Activated CD4-positive, alpha-beta T cell treated with anti-CD3 and anti-CD28 coated beads for 36 hours (primary cell): ENCODE measurements at regions of chr19 and their contacts with region 1.

Region 1: DNA sequence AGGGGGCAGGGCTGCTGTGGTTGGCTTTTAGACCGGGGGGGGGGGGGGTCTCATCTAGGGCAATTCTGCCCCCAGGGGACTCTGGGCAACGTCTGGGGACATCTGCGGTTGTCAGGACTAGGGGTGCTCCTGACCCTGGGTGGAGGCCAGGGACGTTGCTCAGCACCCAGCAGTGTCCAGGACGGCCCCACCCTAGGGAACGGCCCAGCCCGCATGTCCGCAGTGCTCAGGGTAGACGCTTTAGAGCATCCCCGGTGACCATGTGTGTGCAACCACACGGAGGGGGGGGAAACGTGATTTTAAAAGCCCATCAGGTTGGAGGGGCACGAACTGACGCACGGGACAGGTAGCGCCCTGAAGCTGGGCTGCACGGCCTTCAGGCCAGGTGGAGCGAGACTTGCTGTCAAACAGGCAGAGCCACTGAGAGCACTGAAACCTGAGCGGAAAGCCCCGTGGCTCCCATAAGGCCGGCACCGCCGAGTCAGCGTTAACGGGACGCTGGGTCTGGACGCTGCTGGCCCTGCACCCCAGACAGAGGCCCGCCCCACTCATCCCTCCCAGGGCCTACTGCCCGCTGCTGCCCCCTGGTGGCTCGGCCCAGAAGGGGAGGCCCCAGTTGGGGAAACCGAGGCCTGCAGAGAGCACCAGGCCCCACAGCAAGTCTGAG is 8.3 kb downstream of the CACTIN start:
- DNase-seq: peak; percentile 75
- ATAC-seq: peak; percentile 62
- H3K4me3 Mint-ChIP-seq: no peak overlapping the region
- H3K27ac Mint-ChIP-seq: no peak overlapping the region
- H3K4me1 Mint-ChIP-seq: peaks cover 13% of the 10 kb centered on the region
- H3K27me3 Mint-ChIP-seq: no peaks in the 10 kb centered on the region

Region 2: GRCh38 chr19:3544742-3545668 is 73.3 kb before region 1 on chr19:
- CTCF ChIA-PET with region 1: no interaction called
- POLR2A ChIA-PET with region 1: no interaction called
- intact Hi-C with region 1: loop called (anchors 1 to 5 kb)
- DNase-seq: peak; percentile 90
- ATAC-seq: peak; percentile 84
- H3K4me3 Mint-ChIP-seq: no peak overlapping the region
- H3K27ac Mint-ChIP-seq: peak overlapping the region; percentile 58
- H3K4me1 Mint-ChIP-seq: peaks cover 6% of the 10 kb centered on the region
- H3K27me3 Mint-ChIP-seq: no peaks in the 10 kb centered on the region

Region 3: GRCh38 chr19:3586124-3586626 is 32.1 kb before region 1 on chr19:
- CTCF ChIA-PET with region 1: interaction called, 4 read pairs
- POLR2A ChIA-PET with region 1: interaction called, 3 read pairs
- intact Hi-C with region 1: loop called in 1 of 2 experiments (anchors 2 kb)
- DNase-seq: peak; percentile 63
- ATAC-seq: no peak
- H3K4me3 Mint-ChIP-seq: no peak overlapping the region
- H3K27ac Mint-ChIP-seq: no peak overlapping the region
- H3K4me1 Mint-ChIP-seq: no peaks in the 10 kb centered on the region
- H3K27me3 Mint-ChIP-seq: no peaks in the 10 kb centered on the region